Activated CD4-positive, alpha-beta T cell treated with anti-CD3 and anti-CD28 coated beads, Interleukin-2, amount 10 ng/mL, durations not matched to agents 24 days and 14 days (primary cell): ENCODE measurements at regions of chr15 and their contacts with region 1.

Region 1: DNA sequence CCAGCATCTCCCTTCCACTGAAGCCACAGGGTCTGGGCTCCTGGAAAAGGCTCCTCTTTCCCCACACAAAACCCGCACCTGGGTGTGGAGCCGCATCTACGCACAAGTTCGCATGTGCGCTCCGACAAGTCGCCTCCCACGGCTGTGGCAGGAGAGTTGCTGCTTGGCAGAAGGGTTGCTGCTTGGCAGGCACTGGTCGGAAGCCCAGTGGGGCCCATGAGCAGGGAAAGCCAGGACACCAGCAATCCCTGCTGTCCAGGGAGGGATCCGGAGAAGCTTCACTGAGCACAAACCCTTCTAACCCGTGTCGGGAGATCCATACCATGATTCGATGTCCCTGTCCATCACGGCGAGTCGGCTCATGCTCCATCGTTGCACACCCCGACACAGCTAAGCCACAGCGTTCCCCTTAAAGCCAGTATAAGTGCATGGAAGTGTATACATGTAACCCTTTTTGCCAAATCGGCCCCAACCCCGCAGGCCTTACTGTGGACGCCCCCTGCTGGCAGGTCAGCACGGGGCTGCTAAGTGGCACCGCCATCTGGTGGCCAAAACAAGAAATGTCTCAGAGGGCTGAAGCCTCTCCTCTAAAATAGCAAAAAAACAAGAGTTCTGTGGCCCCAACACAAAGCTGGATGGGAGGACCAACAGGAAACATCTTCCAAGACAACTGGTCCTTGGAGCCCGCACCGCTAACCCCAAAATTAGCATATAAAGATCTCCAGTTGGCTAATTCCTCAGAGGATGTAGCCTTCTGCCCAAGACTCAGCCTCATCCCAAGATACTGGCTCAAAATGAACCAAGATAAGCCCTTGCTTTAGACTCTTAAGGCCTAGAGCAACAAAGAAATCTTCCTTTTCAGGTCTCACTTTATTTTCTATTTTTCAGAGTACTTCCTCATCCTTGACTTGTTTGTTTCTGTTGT is 8.3 kb downstream of the ANKRD63 start:
- DNase-seq: peak; percentile 97
- H3K4me3 Mint-ChIP-seq: no peak overlapping the region
- H3K27ac Mint-ChIP-seq: no peak overlapping the region
- H3K4me1 Mint-ChIP-seq: peaks cover 7% of the 10 kb centered on the region
- H3K27me3 Mint-ChIP-seq: peaks cover 21% of the 10 kb centered on the region

Region 2: DNA sequence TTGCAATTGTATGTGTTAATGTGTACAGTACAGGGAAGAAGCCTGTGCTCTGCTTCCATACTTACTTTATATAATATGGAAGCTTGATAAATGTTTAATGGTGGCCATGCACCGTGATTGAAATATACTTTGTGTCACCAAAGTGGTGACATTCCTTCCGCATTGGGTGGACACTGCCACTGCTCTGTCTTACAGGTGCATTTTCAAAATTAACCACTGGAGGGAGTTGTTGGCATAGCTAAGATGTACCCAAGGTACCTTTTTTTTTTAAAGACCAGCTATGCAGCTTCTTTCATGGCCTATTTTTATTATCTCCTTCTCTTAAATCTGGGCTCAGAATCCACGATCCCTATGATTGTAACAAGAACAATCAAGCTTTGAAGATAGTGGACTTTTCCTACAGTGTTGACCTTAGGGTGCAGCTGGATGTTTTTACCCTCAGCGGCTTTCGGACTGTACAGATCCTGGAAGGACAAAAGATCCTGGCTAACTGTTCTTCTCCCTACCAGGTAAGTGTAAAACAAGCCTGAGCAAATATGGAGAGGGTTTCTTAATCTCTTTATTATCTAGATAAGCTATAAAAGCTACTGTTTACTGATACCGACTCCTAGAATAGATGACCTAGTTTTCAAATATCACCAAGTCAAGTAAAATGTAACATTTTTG is 57.3 kb before region 1 on chr15:
- intact Hi-C with region 1: loop called (anchors 1 kb)
- DNase-seq: peak; percentile 88
- H3K4me3 Mint-ChIP-seq: no peak overlapping the region
- H3K27ac Mint-ChIP-seq: no peak overlapping the region
- H3K4me1 Mint-ChIP-seq: no peaks in the 10 kb centered on the region
- H3K27me3 Mint-ChIP-seq: no peaks in the 10 kb centered on the region

Region 3: GRCh38 chr15:40307421-40308211 is 33.0 kb after region 1 on chr15 and contains the start of gene PLCB2:
- intact Hi-C with region 1: loop called (anchors 1 kb)
- DNase-seq: peak; percentile 91
- H3K4me3 Mint-ChIP-seq: peak within 1 kb of the TSS; percentile 92
- H3K27ac Mint-ChIP-seq: peak within 1 kb of the TSS; percentile 98
- H3K4me1 Mint-ChIP-seq: peaks cover 31% of the 10 kb centered on the region
- H3K27me3 Mint-ChIP-seq: peaks cover 11% of the 10 kb centered on the region
- total RNA-seq, gene PLCB2: 82.7 and 95.7 TPM in 2 replicates

Region 4: GRCh38 chr15:40338041-40338657 is 63.5 kb after region 1 on chr15:
- intact Hi-C with region 1: loop called (anchors 1 kb)
- DNase-seq: peak; percentile 94
- H3K4me3 Mint-ChIP-seq: no peak overlapping the region
- H3K27ac Mint-ChIP-seq: no peak overlapping the region
- H3K4me1 Mint-ChIP-seq: peaks cover 13% of the 10 kb centered on the region
- H3K27me3 Mint-ChIP-seq: no peaks in the 10 kb centered on the region

Region 5: GRCh38 chr15:40382580-40383456 is 108.2 kb after region 1 on chr15 and contains the start of gene KNSTRN:
- intact Hi-C with region 1: no loop called
- DNase-seq: peak; percentile 97
- H3K4me3 Mint-ChIP-seq: peak within 1 kb of the TSS; percentile 94
- H3K27ac Mint-ChIP-seq: peak within 1 kb of the TSS; percentile 95
- H3K4me1 Mint-ChIP-seq: peaks cover 26% of the 10 kb centered on the region
- H3K27me3 Mint-ChIP-seq: peaks cover 11% of the 10 kb centered on the region
- total RNA-seq, gene KNSTRN: 50.4 and 52.9 TPM in 2 replicates

Region 6: DNA sequence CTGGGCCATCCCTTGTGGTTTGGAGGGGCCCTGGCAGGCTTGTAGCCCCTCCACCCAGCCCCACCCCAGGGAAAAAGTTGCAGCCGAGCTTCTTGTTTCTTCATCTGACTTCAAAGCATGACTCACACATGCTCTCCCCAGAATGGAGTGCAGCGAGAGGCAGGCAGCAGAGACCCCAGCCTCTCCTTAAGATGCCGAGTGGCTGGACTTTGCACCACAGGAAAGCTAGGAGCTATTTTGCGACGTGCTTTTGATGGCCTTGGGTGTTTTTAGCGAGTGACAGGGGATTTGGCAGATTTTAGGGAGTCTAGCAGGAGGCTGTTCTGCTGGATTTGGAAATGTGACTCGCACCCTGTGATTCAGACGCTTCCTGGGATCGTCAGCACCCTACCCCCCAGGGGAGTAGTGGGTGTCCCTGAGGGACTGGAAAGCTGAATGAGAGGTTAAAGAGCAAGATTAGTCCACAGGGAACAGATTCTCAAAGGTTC is 180.3 kb after region 1 on chr15:
- intact Hi-C with region 1: no loop called
- DNase-seq: peak; percentile 66
- H3K4me3 Mint-ChIP-seq: peak overlapping the region; percentile 67
- H3K27ac Mint-ChIP-seq: peak overlapping the region; percentile 73
- H3K4me1 Mint-ChIP-seq: peaks cover 69% of the 10 kb centered on the region
- H3K27me3 Mint-ChIP-seq: no peaks in the 10 kb centered on the region